ENCODE measurements at regions of chr2 and their contacts with region 1.

Region 1: DNA sequence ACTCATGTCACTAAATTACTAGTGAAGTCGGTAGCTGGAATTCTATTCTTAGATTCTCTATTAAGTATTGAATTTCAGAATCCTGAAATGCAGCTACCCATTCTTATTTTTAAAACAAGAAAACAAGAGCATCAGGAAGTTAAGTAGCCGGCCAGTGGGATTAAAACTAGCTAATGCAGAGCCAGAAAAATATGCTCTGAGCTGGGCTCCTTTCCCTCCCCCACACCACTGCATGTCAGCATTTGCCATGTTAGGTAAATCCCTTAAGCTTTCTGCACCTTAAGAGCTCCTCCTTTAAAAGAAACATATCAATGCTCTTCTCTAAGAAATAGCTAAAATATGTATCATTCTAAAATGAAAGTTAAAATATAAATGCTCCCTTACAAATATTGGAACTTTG is 72.2 kb upstream of the MFF start:
- DNase-seq: no peak
- H3K4me3 Mint-ChIP-seq: no peak overlapping the region
- H3K27ac Mint-ChIP-seq: no peak overlapping the region
- H3K4me1 Mint-ChIP-seq: no peaks in the 10 kb centered on the region
- H3K27me3 Mint-ChIP-seq: no peaks in the 10 kb centered on the region

Region 2: GRCh38 chr2:227238238-227239237 is 14.3 kb before region 1 on chr2:
- CTCF ChIA-PET with region 1: interaction called, 10 read pairs
- intact Hi-C with region 1: no loop called
- DNase-seq: peak; percentile 82
- H3K4me3 Mint-ChIP-seq: no peak overlapping the region
- H3K27ac Mint-ChIP-seq: no peak overlapping the region
- H3K4me1 Mint-ChIP-seq: no peaks in the 10 kb centered on the region
- H3K27me3 Mint-ChIP-seq: peaks cover 7% of the 10 kb centered on the region

Region 3: GRCh38 chr2:227545990-227546389 is 293.2 kb after region 1 on chr2:
- CTCF ChIA-PET with region 1: no interaction called
- intact Hi-C with region 1: no loop called
- DNase-seq: peak; percentile 25
- H3K4me3 Mint-ChIP-seq: no peak overlapping the region
- H3K27ac Mint-ChIP-seq: no peak overlapping the region
- H3K4me1 Mint-ChIP-seq: peaks cover 3% of the 10 kb centered on the region
- H3K27me3 Mint-ChIP-seq: no peaks in the 10 kb centered on the region

Measured in activated naive CD4-positive, alpha-beta T cell treated with anti-CD3 and anti-CD28 coated beads for 36 hours (primary cell).